Heart left ventricle (tissue), 16 donors: ENCODE measurements at regions of chr11 and their contacts with region 1.

Region 1: GRCh38 chr11:102495161-102496042 is 35.1 kb downstream of the MMP7 start:
- DNase-seq: peak in 2 of 5 donors; percentile 39 to 48
- ATAC-seq: peak in 3 of 4 donors; percentile 71 to 83 (median 76)
- H3K4me3 ChIP-seq: no peak overlapping the region
- H3K27ac ChIP-seq: no peak overlapping the region
- H3K4me1 ChIP-seq: no peaks in the 10 kb centered on the region
- H3K27me3 ChIP-seq: peaks cover 0 to 20% (median 0%) of the 10 kb centered on the region in 9 donors
- CTCF ChIP-seq: peak; percentile 62 to 81 (median 72)
- POLR2A ChIP-seq: no peak

Region 2: GRCh38 chr11:102081313-102081712 is 414.1 kb before region 1 on chr11:
- intact Hi-C with region 1: no loop called
- DNase-seq: no peak
- ATAC-seq: no peak
- H3K4me3 ChIP-seq: no peak overlapping the region
- H3K27ac ChIP-seq: no peak overlapping the region
- H3K4me1 ChIP-seq: no peaks in the 10 kb centered on the region
- H3K27me3 ChIP-seq: no peaks in the 10 kb centered on the region
- CTCF ChIP-seq: no peak
- POLR2A ChIP-seq: no peak

Region 3: GRCh38 chr11:102287964-102288724 is 207.3 kb before region 1 on chr11:
- intact Hi-C with region 1: loop called (anchors 2 to 10 kb)
- DNase-seq: peak in 3 of 5 donors; percentile 23 to 31 (median 28)
- ATAC-seq: peak; percentile 78 to 92 (median 82)
- H3K4me3 ChIP-seq: peak overlapping the region in 8 of 12 donors; percentile 10 to 42 (median 28)
- H3K27ac ChIP-seq: no peak overlapping the region
- H3K4me1 ChIP-seq: peaks cover 0 to 23% (median 0%) of the 10 kb centered on the region in 12 donors
- H3K27me3 ChIP-seq: no peaks in the 10 kb centered on the region
- CTCF ChIP-seq: peak; percentile 66 to 84 (median 76)
- POLR2A ChIP-seq: no peak

Region 4: GRCh38 chr11:102293873-102294601 is 201.4 kb before region 1 on chr11:
- intact Hi-C with region 1: loop called in 9 of 10 experiments (anchors 2 to 10 kb)
- DNase-seq: no peak
- ATAC-seq: peak in 3 of 4 donors; percentile 44 to 75 (median 44)
- H3K4me3 ChIP-seq: peak overlapping the region in 2 of 12 donors; percentile 7 to 41
- H3K27ac ChIP-seq: no peak overlapping the region
- H3K4me1 ChIP-seq: peaks cover 0 to 34% (median 0%) of the 10 kb centered on the region in 12 donors
- H3K27me3 ChIP-seq: no peaks in the 10 kb centered on the region
- CTCF ChIP-seq: peak; percentile 21 to 70 (median 58)
- POLR2A ChIP-seq: no peak

Region 5: DNA sequence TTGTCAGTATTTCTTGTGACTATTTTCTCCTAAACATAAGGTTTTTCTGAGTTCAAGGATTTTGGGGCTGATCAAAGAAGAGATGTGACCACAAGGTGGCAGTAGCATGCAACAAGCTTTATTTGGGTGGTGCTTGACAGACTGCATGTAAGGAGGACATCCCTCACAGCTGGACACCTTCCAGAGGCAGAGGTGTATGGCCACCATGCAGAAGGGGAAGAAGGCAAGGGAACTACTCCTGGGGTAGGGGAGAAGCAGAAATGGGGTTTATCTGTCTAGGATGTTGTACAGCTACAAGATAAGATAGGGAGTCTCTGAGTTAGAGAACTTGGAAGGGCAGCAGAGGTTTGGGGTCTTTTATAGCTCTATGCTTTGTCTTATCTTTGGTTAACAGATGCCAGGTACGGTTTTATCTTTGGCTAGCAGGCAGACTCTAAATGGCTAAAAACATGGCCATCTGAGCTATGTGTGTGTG is 153.5 kb before region 1 on chr11:
- intact Hi-C with region 1: loop called (anchors 1 to 5 kb)
- DNase-seq: peak in 4 of 5 donors; percentile 72 to 77 (median 74)
- ATAC-seq: peak in 3 of 4 donors; percentile 56 to 74 (median 66)
- H3K4me3 ChIP-seq: no peak overlapping the region
- H3K27ac ChIP-seq: no peak overlapping the region
- H3K4me1 ChIP-seq: peaks cover 0 to 9% (median 7%) of the 10 kb centered on the region in 12 donors
- H3K27me3 ChIP-seq: no peaks in the 10 kb centered on the region
- CTCF ChIP-seq: peak; percentile 65 to 86 (median 80)
- POLR2A ChIP-seq: no peak

Region 6: GRCh38 chr11:102367364-102367763 is 128.0 kb before region 1 on chr11:
- intact Hi-C with region 1: no loop called
- DNase-seq: no peak
- ATAC-seq: no peak
- H3K4me3 ChIP-seq: no peak overlapping the region
- H3K27ac ChIP-seq: peak overlapping the region in 1 of 12 donors; percentile 19
- H3K4me1 ChIP-seq: peaks cover 0 to 8% (median 0%) of the 10 kb centered on the region in 12 donors
- H3K27me3 ChIP-seq: no peaks in the 10 kb centered on the region
- CTCF ChIP-seq: peak in 6 of 12 donors; percentile 6 to 40 (median 20)
- POLR2A ChIP-seq: no peak

Region 7: DNA sequence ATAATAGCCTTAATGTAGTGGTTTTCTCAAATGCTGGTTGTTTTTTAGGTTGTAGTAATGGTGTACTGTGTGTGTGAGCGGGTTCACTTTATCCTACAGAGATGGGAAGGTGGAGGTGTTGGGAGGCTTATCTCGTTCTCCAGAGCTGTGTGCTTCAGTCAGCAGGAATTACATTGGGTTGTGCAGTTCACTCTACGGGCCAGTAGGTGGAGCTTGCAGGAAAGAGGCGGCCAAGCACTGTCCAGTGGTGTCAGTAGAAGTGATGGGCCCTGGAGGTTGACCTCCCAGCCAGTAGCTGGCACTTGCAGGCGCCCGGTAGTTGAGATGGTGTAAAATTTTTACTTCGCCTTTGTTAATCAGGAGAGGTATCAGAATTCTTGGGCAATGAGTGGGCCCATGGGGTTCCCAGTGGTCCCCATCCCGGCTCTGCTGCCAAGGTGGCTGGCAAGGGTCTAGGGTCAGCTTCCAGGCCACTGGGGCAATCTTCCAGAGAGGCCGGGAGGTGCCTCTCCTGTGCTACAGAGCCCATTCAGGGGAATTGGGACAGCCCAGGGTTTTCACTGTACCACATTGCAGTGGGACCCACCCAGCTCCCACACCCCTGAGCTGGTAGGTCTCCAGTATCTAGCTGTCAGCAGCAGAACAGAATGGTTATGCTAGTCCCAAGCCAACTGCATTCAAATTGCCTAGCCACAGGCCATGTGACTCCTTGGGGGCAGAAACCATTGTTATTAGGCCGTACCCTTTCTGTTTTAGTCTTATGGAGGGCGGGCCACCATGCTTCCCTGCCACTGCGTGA is 104.5 kb before region 1 on chr11:
- intact Hi-C with region 1: loop called (anchors 2 to 10 kb)
- DNase-seq: peak; percentile 47 to 72 (median 64)
- ATAC-seq: peak; percentile 52 to 93 (median 86)
- H3K4me3 ChIP-seq: no peak overlapping the region
- H3K27ac ChIP-seq: no peak overlapping the region
- H3K4me1 ChIP-seq: peaks cover 0 to 2% (median 0%) of the 10 kb centered on the region in 12 donors
- H3K27me3 ChIP-seq: no peaks in the 10 kb centered on the region
- CTCF ChIP-seq: peak; percentile 70 to 87 (median 82)
- POLR2A ChIP-seq: no peak